Left cardiac atrium (tissue), 4 donors: ENCODE measurements at regions of chr3 and their contacts with region 1.

Region 1: DNA sequence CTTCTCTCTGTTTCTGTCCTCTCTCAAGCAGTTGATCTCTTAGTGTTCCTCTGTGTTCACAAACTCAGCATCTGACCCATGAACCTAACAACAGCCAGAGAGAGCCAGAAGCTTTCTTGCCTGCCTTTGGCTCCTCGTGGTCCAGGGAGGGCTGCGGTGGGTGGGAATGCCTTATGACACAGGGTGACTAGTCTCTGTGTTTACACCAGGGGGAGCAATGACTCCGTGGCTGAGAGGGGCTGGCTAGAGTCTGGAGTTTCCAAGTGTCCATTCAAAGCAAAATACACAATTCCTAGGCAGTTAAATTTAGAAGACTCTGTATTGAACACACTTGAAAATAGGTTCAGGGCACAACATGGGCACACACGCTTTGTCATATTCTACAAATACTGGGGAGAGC is 370.0 kb upstream of the FRG2C start:
- DNase-seq: peak; percentile 51
- ATAC-seq: peak; percentile 98 to 99

Region 2: DNA sequence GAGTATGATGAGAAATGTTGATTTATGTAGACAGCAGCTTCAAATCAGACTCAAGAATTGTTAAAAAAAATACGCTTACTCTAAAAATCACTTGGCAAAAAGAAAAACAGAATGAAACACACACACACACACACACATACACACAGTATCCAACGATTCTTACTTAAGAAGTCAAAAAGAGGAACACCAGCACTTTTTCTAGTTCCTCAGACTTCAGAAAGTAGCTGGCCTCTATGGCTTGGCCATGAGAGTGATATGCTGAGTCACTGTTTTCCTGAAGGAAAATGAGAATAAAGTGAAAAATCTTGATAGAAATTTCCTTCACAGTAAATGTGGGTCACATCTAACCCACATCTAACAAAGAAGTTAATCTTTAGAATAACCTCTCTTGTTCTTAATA is 701.8 kb before region 1 on chr3:
- intact Hi-C with region 1: no loop called
- DNase-seq: no peak
- ATAC-seq: no peak

Region 3: DNA sequence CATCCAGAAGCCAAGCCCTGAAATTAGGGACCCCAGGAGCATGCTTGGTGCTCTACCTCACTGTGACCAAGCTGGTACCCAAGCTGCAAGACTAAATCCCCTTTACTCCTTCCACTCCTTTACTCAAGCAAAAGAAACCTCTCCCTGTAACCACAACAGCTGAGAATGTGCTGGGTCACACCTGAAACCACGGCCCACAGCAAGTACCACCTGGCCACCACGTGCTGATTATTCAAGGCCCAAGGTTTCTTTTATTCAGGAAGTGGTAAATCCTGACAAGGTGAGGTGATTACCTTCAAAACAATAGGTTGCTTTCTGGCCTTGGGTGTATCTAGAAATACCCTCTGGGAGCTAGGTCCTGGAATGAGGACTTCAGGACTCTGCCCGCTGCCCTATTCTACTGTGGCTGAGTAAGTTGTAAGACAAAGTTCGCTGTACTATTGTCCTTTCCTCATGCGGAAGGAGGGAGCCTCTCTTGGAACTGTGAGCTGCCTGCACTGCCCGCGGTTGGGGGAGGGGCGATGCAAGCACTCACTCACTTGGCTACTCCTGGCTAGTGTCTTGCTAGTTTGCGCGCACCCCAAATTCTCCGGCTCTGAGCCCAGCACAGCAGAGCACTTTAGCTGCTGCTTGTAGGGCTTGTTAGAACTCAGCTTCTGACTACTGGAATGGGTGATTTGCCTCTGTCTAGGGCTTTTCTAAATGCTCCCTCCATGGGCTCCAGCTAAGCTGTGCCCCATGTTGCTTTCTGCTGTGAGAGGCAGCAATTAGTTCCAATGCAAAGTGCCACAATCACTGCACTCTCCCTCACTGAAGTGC is 192.6 kb before region 1 on chr3:
- intact Hi-C with region 1: no loop called
- DNase-seq: no peak
- ATAC-seq: no peak

Region 4: GRCh38 chr3:75650191-75650590 is 356.1 kb after region 1 on chr3:
- intact Hi-C with region 1: loop called in 1 of 2 experiments (anchors 10 kb)
- DNase-seq: no peak
- ATAC-seq: no peak